CD8-positive, alpha-beta T cell (primary cell): ENCODE measurements at regions of chr6 and their contacts with region 1.

Region 1: DNA sequence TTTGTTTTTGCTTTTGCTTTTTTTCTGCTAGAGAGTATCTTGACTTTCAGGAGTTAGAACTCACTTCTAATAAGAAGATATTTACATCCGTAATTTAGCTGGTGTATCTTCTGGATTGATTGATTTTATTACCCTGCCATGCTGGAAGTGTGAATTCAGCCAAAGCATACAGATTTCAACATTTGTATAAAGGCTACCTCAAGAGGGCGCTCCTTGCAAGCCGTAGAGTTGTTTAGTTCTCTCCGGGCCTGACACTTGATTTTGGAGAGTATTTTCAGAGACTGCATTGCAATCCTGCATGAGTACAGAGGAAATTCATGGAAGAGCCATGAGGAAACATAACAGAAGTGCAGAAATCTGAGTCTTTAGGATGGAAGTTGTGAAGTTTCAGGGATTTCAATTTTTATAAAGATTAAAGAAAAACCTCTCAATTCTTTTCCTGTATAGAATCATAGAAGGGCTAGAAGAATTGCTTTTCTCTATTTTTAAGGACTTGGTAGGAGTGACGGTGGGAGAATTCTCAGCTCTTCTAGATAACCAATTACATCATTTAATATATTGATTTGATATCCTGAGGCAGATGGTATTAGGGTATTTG is 66.7 kb upstream of the TIAM2 start:
- DNase-seq: peak; percentile 14 to 70 (median 50)
- ATAC-seq: no peak
- H3K4me3 ChIP-seq: no peak overlapping the region
- H3K4me3 Mint-ChIP-seq: no peak overlapping the region
- H3K27ac ChIP-seq: no peak overlapping the region
- H3K27ac Mint-ChIP-seq: no peak overlapping the region
- H3K4me1 ChIP-seq: no peaks in the 10 kb centered on the region
- H3K4me1 Mint-ChIP-seq: peaks cover 9% of the 10 kb centered on the region
- H3K27me3 ChIP-seq: no peaks in the 10 kb centered on the region
- H3K27me3 Mint-ChIP-seq: no peaks in the 10 kb centered on the region
- CTCF ChIP-seq: peak; percentile 76

Region 2: DNA sequence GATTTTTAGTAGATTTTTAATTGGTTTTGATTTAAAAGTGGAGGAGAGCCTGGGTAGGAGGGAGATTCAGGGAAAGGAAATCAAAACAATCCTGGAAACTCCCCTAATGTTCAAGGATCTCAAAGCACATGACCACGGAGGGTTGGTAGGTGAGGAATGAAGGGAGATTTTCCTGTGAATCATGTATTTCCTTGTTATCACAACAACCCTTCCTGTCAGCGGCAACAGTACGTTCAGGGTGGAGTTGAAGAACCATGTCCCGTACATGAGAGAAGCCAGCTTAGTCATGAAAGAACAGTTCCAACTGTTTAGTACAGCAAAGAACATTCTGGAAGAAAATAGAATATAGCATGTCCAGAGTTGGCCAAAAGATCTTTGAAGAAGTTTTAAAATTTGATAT is 274.6 kb before region 1 on chr6:
- CTCF ChIA-PET with region 1: no interaction called
- POLR2A ChIA-PET with region 1: no interaction called
- intact Hi-C with region 1: no loop called
- DNase-seq: no peak
- ATAC-seq: no peak
- H3K4me3 ChIP-seq: no peak overlapping the region
- H3K4me3 Mint-ChIP-seq: no peak overlapping the region
- H3K27ac ChIP-seq: no peak overlapping the region
- H3K27ac Mint-ChIP-seq: no peak overlapping the region
- H3K4me1 ChIP-seq: no peaks in the 10 kb centered on the region
- H3K4me1 Mint-ChIP-seq: no peaks in the 10 kb centered on the region
- H3K27me3 ChIP-seq: no peaks in the 10 kb centered on the region
- H3K27me3 Mint-ChIP-seq: no peaks in the 10 kb centered on the region
- CTCF ChIP-seq: no peak

Region 3: DNA sequence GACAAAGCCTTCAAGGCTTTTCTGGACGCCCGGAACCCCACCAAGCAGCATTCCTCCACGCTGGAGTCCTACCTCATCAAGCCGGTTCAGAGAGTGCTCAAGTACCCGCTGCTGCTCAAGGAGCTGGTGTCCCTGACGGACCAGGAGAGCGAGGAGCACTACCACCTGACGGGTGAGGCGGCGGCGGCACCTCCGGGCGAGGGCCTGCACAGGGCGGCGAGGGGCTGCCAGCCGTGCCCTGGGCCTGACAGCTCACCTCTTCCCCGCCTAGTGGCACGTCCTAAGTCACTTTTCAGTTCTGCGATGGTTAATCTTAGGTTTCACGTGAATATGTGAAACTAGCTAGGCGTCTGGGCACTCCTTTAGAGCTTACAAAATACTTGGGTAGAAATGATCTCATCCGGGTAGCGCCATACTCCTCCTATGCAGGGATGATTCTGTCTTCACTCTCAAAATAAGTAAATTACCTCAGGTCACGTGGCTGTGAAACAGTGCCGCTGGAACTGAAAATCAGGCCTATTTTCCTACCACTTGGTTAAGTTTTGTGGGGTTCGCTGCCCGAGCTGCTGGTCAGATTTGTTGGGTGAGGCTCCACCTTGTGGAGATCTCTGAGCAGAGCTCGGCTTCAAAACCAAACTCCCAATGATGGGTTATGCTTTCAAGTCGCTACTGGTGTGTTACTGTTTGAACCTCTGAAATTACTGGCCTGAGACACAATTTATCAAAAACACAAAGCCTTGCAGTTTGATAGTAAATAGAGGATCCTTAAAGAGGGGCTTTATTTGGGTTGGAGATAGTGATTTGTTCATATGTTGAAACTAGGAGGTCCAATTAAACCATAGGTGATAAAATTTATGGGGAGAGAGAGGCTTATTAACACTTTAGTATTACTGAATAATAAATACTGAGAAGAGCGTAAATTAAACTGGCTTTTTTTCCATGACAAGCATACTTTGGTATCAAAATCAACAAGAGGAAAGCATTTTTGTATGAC is 319.9 kb after region 1 on chr6:
- CTCF ChIA-PET with region 1: no interaction called
- POLR2A ChIA-PET with region 1: no interaction called
- intact Hi-C with region 1: loop called (anchors 5 to 10 kb)
- DNase-seq: peak in 4 of 9 experiments; percentile 5 to 30 (median 28)
- ATAC-seq: no peak
- H3K4me3 ChIP-seq: no peak overlapping the region
- H3K4me3 Mint-ChIP-seq: no peak overlapping the region
- H3K27ac ChIP-seq: no peak overlapping the region
- H3K27ac Mint-ChIP-seq: no peak overlapping the region
- H3K4me1 ChIP-seq: no peaks in the 10 kb centered on the region
- H3K4me1 Mint-ChIP-seq: no peaks in the 10 kb centered on the region
- H3K27me3 ChIP-seq: no peaks in the 10 kb centered on the region
- H3K27me3 Mint-ChIP-seq: no peaks in the 10 kb centered on the region
- CTCF ChIP-seq: no peak

Region 4: DNA sequence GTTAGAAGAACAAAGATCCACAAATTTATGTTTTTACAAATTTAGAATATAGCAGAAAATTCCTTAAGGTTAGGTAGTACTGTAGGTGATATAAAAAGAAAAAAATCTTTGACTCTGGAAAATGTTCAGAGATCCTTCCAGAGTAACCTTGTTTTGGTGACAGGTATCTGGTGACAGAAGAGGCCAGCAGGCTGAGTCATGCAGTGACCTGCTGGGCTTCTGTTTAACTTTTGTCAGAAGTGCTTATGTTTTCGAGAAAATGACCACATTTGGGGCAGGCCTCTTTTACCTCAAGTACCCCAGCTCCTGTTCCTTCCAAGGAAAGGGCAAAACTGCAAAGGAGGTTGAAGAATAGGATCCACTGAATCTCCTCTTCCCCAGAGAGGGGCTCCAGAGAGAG is 324.9 kb after region 1 on chr6:
- CTCF ChIA-PET with region 1: no interaction called
- POLR2A ChIA-PET with region 1: no interaction called
- intact Hi-C with region 1: loop called (anchors 5 to 10 kb)
- DNase-seq: no peak
- ATAC-seq: no peak
- H3K4me3 ChIP-seq: no peak overlapping the region
- H3K4me3 Mint-ChIP-seq: no peak overlapping the region
- H3K27ac ChIP-seq: no peak overlapping the region
- H3K27ac Mint-ChIP-seq: peak overlapping the region; percentile 74
- H3K4me1 ChIP-seq: no peaks in the 10 kb centered on the region
- H3K4me1 Mint-ChIP-seq: no peaks in the 10 kb centered on the region
- H3K27me3 ChIP-seq: no peaks in the 10 kb centered on the region
- H3K27me3 Mint-ChIP-seq: no peaks in the 10 kb centered on the region
- CTCF ChIP-seq: no peak

Region 5: DNA sequence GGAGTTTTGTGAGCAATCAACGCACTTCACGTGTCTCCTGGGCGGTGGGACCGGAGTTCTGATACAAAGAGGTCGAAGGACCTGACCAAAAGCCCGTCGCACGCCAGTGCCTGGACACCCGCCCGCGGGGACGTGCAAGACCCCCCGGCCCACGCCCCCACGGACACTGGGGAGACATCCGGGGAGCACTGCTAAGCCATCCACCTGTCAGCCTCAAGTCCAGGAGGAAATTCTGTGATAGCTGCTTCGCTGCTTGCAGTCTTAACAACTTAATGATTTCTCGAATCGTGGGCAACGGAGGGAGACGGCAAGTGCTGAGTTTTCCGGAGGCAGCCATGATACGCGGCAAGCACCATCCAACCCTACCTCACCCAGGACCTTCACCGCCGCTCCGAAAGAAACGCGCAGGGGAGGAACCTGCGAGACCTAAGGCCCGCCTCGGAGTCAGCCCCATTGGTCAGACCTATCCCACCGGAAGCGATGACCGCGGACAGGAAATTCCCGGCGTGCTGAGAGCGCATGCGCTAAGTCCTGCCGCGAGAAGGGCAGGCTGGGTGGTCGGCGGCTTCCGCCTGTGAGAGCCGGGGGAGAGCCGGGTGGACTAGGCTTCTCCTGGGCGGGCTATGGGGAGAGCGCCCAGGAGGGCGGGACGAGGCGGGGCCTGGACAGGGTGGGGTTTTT is 385.8 kb after region 1 on chr6 and contains the start of gene TFB1M:
- CTCF ChIA-PET with region 1: no interaction called
- POLR2A ChIA-PET with region 1: no interaction called
- intact Hi-C with region 1: loop called in 1 of 2 experiments (anchors 5 kb)
- DNase-seq: peak; percentile 91 to 99 (median 97)
- ATAC-seq: peak; percentile 93
- H3K4me3 ChIP-seq: peak within 1 kb of the TSS; percentile 92 to 97
- H3K4me3 Mint-ChIP-seq: peak within 1 kb of the TSS; percentile 98
- H3K27ac ChIP-seq: peak within 1 kb of the TSS; percentile 83 to 87
- H3K27ac Mint-ChIP-seq: peak within 1 kb of the TSS; percentile 97
- H3K4me1 ChIP-seq: peaks cover 7% of the 10 kb centered on the region
- H3K4me1 Mint-ChIP-seq: peaks cover 35% of the 10 kb centered on the region
- H3K27me3 ChIP-seq: no peaks in the 10 kb centered on the region
- H3K27me3 Mint-ChIP-seq: no peaks in the 10 kb centered on the region
- CTCF ChIP-seq: no peak
- total RNA-seq, gene TFB1M: 6.3 to 7.9 TPM